RWPE1 (cell line): ENCODE measurements at regions of chr2 and their contacts with region 1.

Region 1: DNA sequence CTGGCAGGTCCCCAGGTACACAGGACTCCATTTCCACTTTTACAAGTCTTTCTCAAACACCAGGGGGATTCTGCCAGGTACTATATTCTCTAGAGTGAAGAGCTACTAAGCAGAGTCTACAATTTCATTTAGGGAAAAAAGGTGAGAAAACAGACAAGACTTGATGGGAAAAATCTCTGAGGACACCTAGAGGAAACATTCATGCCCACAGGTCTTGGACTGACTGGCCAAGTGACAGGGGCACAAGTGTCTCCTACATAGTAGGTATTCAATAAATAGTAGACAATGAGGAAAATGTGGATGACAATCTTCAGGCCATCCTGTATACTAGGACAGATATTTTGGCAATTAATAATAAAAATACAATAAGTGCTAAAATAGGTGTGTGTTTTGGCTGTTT is 228.6 kb downstream of the CLIP4 start:
- DNase-seq: no peak
- H3K27ac ChIP-seq: no peak overlapping the region
- CTCF ChIP-seq: no peak

Region 2: DNA sequence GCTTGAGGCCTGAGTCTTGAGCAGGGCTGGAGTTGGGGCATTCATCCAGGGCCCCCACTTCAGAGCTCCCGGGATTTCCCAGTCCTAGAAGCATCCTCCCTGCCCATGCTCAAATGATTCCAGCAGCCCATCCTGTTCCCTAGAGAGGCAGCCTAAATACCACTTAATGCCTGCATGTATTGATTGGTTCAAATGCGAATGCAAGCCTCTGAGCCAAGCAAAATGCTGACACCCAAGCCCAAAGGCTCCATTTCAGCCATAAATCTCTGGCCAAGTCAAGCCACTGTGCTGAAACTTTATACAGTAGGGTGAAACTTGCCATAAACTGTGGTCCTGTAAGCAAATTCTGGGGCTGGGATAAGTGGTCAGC is 51.1 kb after region 1 on chr2:
- CTCF ChIA-PET with region 1: no interaction called
- POLR2A ChIA-PET with region 1: interaction called, 11 read pairs
- DNase-seq: no peak
- H3K27ac ChIP-seq: no peak overlapping the region
- CTCF ChIP-seq: no peak

Region 3: DNA sequence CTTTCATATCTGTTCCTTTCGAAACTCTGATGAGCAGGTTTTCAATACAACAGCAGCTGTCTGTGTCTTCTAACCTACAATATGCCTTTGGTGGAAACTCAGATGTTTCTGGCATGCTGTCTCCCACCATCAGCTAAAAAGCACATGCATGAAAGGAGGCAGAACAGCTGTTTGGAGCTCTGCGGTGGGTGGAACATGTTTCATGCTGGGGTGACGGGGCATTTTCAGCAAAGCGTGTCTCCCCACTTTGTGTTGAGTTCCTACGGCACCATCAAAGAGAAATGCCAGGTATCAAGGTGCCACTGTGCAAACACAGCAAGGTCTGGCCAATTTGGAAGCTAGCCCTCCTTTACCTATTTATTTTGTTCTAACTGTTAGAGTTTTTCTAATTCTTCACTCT is 61.4 kb after region 1 on chr2:
- CTCF ChIA-PET with region 1: no interaction called
- POLR2A ChIA-PET with region 1: no interaction called
- DNase-seq: no peak
- H3K27ac ChIP-seq: no peak overlapping the region
- CTCF ChIP-seq: no peak